AG04450 (cell line): ENCODE measurements at regions of chr6 and their contacts with region 1.

Region 1: GRCh38 chr6:33391278-33391921 is at the start of gene KIFC1:
- DNase-seq: peak; percentile 100
- H3K4me3 ChIP-seq: peak within 1 kb of the TSS; percentile 92
- H3K27ac ChIP-seq: peak within 1 kb of the TSS; percentile 89
- H3K27me3 ChIP-seq: no peaks in the 10 kb centered on the region
- CTCF ChIP-seq: peak; percentile 95
- polyA plus RNA-seq, gene KIFC1: 10.2 TPM in 2 replicates

Region 2: DNA sequence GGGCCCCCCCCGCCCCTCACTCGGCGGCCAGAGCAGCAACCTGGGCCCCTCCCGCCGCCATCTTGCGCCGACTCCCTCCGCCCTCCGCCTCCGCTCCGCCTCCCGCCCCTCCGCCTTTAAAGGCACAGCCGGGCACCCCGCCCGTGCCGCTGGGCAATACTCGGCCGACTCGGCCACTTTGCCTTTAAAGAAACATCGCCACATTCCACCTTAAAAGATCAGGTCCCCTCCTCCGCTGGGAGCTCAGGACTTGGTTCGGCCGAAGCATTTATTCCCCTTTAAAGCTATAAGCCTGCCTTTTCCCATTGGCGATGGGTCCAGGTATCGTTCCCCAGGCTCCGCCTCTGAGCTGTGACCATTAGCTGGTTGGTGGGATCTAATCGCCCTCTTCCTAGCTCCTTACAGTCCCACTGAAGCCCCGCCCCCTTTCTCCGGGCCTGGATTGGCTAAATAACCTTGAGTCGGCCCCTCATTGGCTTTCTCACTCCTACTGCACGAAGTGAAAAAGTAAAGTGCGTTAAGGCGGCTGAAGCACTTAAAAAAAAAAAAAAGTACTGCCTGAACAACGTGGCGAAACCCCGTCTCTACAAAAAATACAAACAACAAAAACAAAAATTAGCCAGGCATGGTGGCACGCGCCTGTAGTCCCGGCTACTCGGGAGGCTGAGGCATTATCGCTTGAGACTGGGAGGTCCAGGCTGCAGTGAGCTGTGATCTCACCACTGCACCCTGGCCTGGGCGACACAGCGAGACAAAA is 73.6 kb before region 1 on chr6 and contains the start of gene ZBTB22:
- CTCF ChIA-PET with region 1: interaction called, 13 read pairs
- POLR2A ChIA-PET with region 1: no interaction called
- DNase-seq: peak; percentile 98
- H3K4me3 ChIP-seq: peak within 1 kb of the TSS; percentile 78
- H3K27ac ChIP-seq: peak within 1 kb of the TSS; percentile 72
- H3K27me3 ChIP-seq: no peaks in the 10 kb centered on the region
- CTCF ChIP-seq: no peak
- polyA plus RNA-seq, gene ZBTB22: 8.4 and 11.8 TPM in 2 replicates

Region 3: DNA sequence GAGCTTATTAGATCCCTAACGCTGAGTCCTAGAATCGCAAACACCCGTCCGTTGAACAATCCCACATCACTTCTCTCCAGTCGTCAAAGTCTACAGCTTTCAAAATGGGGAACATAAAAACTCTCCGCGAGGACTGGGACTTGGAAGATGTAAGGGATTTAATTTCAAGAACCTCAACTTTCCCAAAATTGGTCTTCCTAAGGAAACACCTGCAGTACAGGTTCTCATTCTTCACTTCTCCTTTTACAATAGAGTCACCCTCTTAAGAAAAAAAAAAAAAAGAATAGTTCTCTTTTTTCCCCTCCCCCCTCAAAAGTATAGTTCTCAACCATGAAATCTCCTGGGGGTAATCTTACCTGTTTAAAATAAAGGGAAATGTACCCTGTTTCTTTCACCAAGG is 67.3 kb before region 1 on chr6:
- CTCF ChIA-PET with region 1: interaction called, 15 read pairs
- POLR2A ChIA-PET with region 1: no interaction called
- DNase-seq: no peak
- H3K4me3 ChIP-seq: no peak overlapping the region
- H3K27ac ChIP-seq: no peak overlapping the region
- H3K27me3 ChIP-seq: peaks cover 3% of the 10 kb centered on the region
- CTCF ChIP-seq: no peak

Region 4: DNA sequence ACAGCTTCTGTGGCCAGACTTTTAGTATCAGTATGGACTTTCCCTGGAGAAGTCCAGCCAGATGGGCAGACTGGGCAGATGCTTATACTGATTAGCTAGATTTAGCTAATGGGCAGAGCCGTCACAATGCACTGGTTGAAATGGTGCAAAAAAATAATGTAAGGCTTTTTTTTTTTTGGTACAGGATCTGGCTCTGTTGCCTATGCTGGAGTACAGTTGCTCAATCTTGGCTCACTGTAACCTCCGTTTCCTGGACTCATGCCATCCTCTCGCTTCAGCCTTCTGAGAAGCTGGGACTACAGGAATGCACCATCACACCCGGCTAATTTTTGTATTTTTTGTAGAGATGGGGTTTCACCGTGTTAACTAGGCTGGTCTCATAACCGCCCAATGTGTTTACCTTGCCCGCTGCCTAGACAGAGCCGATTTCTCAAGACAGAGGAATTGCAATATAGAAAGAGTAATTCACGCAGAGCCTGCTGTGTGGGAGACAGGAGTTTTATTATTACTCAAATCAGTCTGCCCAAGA is 16.2 kb before region 1 on chr6:
- CTCF ChIA-PET with region 1: interaction called, 14 read pairs
- POLR2A ChIA-PET with region 1: no interaction called
- DNase-seq: peak; percentile 59
- H3K4me3 ChIP-seq: no peak overlapping the region
- H3K27ac ChIP-seq: no peak overlapping the region
- H3K27me3 ChIP-seq: no peaks in the 10 kb centered on the region
- CTCF ChIP-seq: no peak

Region 5: DNA sequence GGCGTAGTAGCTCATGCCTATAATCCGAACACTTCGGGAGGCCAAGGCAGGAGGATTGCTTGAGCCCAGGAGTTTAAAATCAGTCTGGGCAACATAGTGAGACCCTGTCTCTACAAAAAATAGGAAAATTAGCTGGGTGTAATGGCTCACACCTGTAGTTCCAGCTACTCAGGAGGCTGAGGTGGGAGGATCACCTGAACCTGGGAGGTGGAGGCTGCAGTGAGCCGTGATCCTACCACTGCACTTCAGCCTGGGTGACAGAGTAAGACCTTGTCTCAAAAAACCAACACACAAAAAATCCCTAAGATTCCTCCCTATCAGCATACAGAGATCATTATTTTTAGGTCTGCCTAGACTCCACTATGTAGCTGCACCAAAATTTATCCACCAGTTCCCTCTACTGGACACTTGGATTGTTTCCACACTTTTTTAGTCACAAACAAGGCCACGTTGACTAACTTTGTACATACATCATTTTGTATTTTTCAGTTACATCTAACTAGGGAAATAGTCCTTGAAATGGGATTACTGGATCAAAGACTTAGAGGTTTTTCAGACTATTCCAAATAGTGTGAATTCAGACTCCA is 15.8 kb after region 1 on chr6:
- CTCF ChIA-PET with region 1: interaction called, 23 read pairs
- POLR2A ChIA-PET with region 1: no interaction called
- DNase-seq: no peak
- H3K4me3 ChIP-seq: no peak overlapping the region
- H3K27ac ChIP-seq: peak overlapping the region; percentile 21
- H3K27me3 ChIP-seq: no peaks in the 10 kb centered on the region
- CTCF ChIP-seq: peak; percentile 35; the same call in 1 of the 2 replicates

Region 6: DNA sequence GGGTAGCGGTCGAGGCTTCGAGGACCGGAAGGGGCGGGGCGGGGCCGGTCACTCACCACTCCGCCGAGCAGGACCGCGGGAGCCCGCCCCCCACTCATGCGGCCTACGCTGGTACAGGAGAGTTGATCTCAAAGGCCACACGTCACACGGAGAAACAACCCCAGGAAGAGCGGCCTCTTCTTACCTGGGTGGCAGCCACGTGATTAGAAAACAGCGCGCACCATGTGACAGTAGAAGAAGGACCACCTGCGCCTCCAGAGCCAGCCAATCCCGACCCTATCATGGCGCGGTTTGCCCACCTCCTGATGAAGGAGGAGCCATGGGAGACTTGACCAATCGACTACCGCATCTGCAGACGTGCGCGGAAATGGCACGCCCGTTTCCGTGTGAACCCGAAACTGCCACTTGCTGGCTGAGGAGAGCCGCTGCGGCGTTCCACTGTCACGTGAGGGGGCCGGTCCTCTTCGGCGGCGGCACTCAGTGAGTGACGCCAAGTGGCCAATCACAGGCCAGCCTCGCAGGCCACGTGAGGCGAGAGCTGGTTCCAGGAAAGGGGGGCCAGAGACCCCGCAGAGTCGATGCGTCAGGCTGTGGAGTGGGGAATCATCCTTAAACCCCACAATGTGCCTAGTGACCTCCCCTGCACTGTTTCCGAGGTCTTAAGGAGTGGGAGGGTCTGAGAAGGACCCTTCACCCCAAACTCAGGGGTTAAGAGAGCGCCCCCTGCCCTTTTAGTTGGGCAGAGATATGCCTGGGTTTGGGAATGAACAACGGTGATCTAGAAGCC is 26.7 kb after region 1 on chr6 and contains the start of gene CUTA:
- CTCF ChIA-PET with region 1: interaction called, 15 read pairs
- POLR2A ChIA-PET with region 1: no interaction called
- DNase-seq: peak; percentile 99
- H3K4me3 ChIP-seq: peak within 1 kb of the TSS; percentile 93
- H3K27ac ChIP-seq: peak within 1 kb of the TSS; percentile 97
- H3K27me3 ChIP-seq: no peaks in the 10 kb centered on the region
- CTCF ChIP-seq: no peak
- polyA plus RNA-seq, gene CUTA: 298 and 340 TPM in 2 replicates

Region 7: DNA sequence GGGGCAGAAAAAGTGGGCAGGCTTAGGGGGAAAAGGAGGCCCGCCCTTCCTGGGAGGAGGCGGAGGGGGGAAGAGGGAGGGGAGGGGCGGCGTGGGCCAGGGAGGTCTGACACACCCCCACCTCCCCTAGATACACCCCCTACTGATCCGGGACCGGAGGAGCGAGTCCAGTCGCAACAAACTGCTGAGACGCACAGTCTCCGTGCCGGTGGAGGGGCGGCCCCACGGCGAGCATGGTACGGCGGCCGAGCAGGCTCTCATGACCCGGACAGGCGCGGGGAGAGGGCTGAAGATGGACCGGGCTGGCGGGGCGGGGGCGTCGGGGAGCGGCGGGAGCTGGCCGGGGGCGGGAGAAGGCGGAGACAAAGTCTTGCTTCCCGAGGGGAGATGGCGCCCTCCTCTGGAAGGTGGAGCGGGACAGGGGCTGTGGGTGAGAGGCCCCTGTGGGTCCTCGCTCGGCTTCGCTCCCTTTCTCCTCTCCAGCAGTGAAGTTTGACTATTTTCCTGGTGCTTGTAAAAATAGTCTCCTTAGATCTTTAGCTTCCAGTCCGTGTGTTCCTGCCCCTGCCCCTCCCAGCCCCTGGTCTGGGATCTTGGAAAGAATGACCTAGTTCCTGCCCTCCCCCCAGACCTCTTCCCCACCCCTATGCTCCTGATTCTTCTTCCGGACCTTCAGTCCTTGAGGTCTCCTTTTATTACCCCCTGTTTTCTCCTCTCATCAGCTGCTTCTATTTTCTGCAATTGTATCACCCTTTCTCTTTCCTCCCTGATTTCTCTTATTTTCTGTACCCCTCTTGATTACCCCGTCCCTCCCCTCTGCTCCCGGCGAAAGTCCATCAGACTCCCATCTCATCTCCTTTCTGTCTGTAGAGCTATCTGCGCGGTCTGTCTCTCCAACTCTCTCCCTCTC is 34.5 kb after region 1 on chr6:
- CTCF ChIA-PET with region 1: interaction called, 18 read pairs
- POLR2A ChIA-PET with region 1: no interaction called
- DNase-seq: peak; percentile 43
- H3K4me3 ChIP-seq: peak overlapping the region; percentile 65
- H3K27ac ChIP-seq: peak overlapping the region; percentile 83
- H3K27me3 ChIP-seq: no peaks in the 10 kb centered on the region
- CTCF ChIP-seq: peak; percentile 64